CD4-positive, alpha-beta memory T cell (primary cell): ENCODE measurements at regions of chr3 and their contacts with region 1.

Region 1: DNA sequence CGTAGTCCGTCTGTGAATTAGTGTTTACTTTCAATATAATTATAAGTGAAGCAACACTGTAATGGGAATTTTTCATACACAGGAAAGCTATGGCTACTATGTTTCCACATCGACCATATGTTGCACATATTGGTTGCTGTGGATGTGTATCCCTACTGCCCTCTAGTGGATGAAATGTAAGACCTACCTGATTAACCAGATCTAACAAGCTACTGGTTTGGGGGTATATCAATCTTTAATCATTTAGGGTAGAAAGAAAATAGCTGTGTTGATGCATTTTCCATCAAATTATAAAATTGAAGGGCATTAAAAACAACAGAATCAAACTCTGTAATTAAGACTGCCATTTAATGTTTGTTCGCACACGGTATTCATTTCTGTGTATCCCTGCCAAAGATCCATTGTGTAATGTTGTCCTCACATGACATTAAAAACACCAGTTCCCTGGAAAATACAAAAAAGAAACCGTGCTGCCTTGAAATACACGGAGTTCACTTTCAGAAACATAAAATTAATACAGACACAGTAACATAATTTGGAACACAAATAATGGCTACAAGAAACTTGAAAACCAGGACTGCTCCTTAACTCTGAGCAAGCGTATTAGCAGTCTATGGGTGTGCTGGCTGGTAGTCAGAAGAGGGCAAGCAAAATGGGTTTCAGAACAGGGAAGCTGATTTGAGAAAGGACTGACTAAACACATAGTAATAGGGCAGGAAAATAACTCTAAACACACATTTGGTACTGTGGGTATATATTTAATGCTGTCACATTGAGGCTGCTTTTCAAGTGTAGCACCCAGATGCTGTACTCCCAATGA is 125.1 kb downstream of the TIGIT start:
- DNase-seq: peak; percentile 51 to 68 (median 65)
- H3K4me3 ChIP-seq: no peak overlapping the region
- H3K4me3 Mint-ChIP-seq: no peak overlapping the region
- H3K27ac ChIP-seq: no peak overlapping the region
- H3K27ac Mint-ChIP-seq: peak overlapping the region in 2 of 7 donors; percentile 11 to 19
- H3K4me1 ChIP-seq: peaks cover 3% of the 10 kb centered on the region
- H3K4me1 Mint-ChIP-seq: peaks cover 3 to 7% (median 5%) of the 10 kb centered on the region in 4 donors
- H3K27me3 ChIP-seq: no peaks in the 10 kb centered on the region
- H3K27me3 Mint-ChIP-seq: no peaks in the 10 kb centered on the region

Region 2: GRCh38 chr3:113736548-113737089 is 682.3 kb before region 1 on chr3:
- CTCF ChIA-PET with region 1: interaction called, 6 read pairs
- POLR2A ChIA-PET with region 1: no interaction called
- intact Hi-C with region 1: loop called (anchors 1 kb)
- DNase-seq: peak; percentile 47 to 72 (median 71)
- H3K4me3 ChIP-seq: no peak overlapping the region
- H3K4me3 Mint-ChIP-seq: peak overlapping the region in 1 of 8 donors; percentile 15
- H3K27ac ChIP-seq: peak overlapping the region; percentile 32
- H3K27ac Mint-ChIP-seq: peak overlapping the region; percentile 48 to 88 (median 77)
- H3K4me1 ChIP-seq: peaks cover 32% of the 10 kb centered on the region
- H3K4me1 Mint-ChIP-seq: peaks cover 35 to 61% (median 42%) of the 10 kb centered on the region in 4 donors
- H3K27me3 ChIP-seq: no peaks in the 10 kb centered on the region
- H3K27me3 Mint-ChIP-seq: no peaks in the 10 kb centered on the region

Region 3: GRCh38 chr3:114152519-114153151 is 266.3 kb before region 1 on chr3:
- CTCF ChIA-PET with region 1: interaction called, 136 read pairs
- POLR2A ChIA-PET with region 1: no interaction called
- intact Hi-C with region 1: loop called (anchors 1 kb)
- DNase-seq: peak; percentile 76 to 81 (median 78)
- H3K4me3 ChIP-seq: peak overlapping the region in 1 of 2 donors; percentile 34
- H3K4me3 Mint-ChIP-seq: peak overlapping the region; percentile 58 to 76 (median 68)
- H3K27ac ChIP-seq: no peak overlapping the region
- H3K27ac Mint-ChIP-seq: peak overlapping the region in 6 of 7 donors; percentile 4 to 79 (median 46)
- H3K4me1 ChIP-seq: peaks cover 6% of the 10 kb centered on the region
- H3K4me1 Mint-ChIP-seq: peaks cover 0 to 6% (median 5%) of the 10 kb centered on the region in 4 donors
- H3K27me3 ChIP-seq: no peaks in the 10 kb centered on the region
- H3K27me3 Mint-ChIP-seq: no peaks in the 10 kb centered on the region

Region 4: DNA sequence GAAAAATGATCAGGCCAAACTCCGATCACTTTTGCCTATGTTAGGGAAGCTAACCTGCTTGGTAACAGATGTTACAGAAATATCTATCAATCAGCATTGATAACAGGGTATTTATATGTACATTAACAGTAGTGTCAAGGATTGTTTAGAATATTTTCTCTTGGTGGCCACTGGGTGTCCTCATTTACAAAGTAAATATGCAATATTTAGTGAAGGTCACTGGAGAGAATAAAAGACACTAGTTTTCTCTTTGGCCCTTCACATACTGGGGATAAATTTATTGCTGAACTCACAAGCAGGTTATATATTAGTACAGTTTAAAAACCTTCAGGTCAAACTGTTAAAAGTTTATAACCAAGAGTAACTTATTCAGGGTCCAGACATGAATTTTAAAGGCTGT is 56.1 kb before region 1 on chr3:
- CTCF ChIA-PET with region 1: interaction called, 11 read pairs
- POLR2A ChIA-PET with region 1: no interaction called
- intact Hi-C with region 1: no loop called
- DNase-seq: no peak
- H3K4me3 ChIP-seq: no peak overlapping the region
- H3K4me3 Mint-ChIP-seq: no peak overlapping the region
- H3K27ac ChIP-seq: no peak overlapping the region
- H3K27ac Mint-ChIP-seq: peak overlapping the region in 1 of 7 donors; percentile 4
- H3K4me1 ChIP-seq: no peaks in the 10 kb centered on the region
- H3K4me1 Mint-ChIP-seq: no peaks in the 10 kb centered on the region
- H3K27me3 ChIP-seq: no peaks in the 10 kb centered on the region
- H3K27me3 Mint-ChIP-seq: no peaks in the 10 kb centered on the region

Region 5: DNA sequence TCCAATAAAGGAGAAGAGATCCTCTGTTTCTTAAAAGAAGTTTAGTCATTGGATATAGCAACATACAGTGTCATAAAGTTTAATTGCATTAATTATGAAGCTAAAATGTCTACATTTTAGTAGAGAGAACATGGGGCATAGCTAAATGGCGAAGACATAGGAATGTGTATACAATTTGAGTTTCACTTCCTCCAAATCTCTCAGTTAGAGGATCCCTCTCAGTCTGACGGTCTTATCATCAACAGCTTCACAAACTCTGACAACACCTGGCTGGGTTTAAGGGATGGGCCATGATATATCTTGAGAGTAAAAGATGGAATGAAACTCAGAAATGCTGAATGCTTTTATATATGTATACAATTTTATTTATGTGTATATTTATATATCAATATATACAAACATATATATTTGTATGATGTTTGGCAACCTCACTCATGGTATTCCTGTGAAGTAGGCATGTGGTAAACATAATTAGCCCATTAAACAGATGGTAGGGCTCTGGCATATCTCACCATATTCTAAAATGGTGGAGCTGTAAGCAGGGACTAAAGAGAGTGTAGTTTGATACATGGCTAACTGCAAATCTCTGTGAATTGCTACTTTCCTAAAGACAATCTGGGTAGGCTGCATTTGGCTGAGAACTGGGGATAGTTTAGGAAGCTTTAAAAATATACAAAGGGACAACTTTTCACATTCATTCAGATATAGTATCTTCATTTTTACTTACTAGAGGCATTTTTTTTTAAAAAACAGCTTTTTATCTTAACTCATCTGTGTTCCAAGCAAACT is 13.5 kb before region 1 on chr3:
- CTCF ChIA-PET with region 1: interaction called, 37 read pairs
- POLR2A ChIA-PET with region 1: no interaction called
- intact Hi-C with region 1: no loop called
- DNase-seq: no peak
- H3K4me3 ChIP-seq: no peak overlapping the region
- H3K4me3 Mint-ChIP-seq: no peak overlapping the region
- H3K27ac ChIP-seq: no peak overlapping the region
- H3K27ac Mint-ChIP-seq: no peak overlapping the region
- H3K4me1 ChIP-seq: no peaks in the 10 kb centered on the region
- H3K4me1 Mint-ChIP-seq: peaks cover 0 to 1% (median 0%) of the 10 kb centered on the region in 4 donors
- H3K27me3 ChIP-seq: no peaks in the 10 kb centered on the region
- H3K27me3 Mint-ChIP-seq: no peaks in the 10 kb centered on the region

Region 6: DNA sequence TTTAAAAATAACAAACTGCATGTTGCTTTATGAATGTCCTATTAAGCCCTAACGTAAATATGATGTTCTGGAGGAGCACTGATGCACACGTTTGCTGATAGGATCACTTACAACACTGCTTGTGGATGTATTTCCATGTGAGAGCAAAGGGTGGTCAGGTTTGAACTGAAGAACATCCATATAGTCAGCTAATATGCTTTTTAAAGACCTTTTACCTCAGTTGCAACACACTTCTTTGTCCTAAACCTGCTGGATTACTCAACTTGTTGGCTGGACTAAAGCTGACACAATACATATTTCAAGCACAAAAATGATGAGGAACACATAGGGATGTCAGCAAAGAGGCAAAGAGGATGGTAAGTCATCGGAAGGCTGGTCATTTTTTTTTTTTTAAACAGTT is 61.5 kb after region 1 on chr3:
- CTCF ChIA-PET with region 1: no interaction called
- POLR2A ChIA-PET with region 1: no interaction called
- intact Hi-C with region 1: no loop called
- DNase-seq: no peak
- H3K4me3 ChIP-seq: no peak overlapping the region
- H3K4me3 Mint-ChIP-seq: no peak overlapping the region
- H3K27ac ChIP-seq: no peak overlapping the region
- H3K27ac Mint-ChIP-seq: no peak overlapping the region
- H3K4me1 ChIP-seq: peaks cover 12% of the 10 kb centered on the region
- H3K4me1 Mint-ChIP-seq: peaks cover 16 to 25% (median 20%) of the 10 kb centered on the region in 4 donors
- H3K27me3 ChIP-seq: no peaks in the 10 kb centered on the region
- H3K27me3 Mint-ChIP-seq: no peaks in the 10 kb centered on the region